GM10248 (cell line): ENCODE measurements at regions of chr19 and their contacts with region 1.

Region 1: GRCh38 chr19:28878862-28879566 is 333.9 kb downstream of the UQCRFS1 start:
- DNase-seq: peak; percentile 57
- CTCF ChIP-seq: peak; percentile 40

Region 2: DNA sequence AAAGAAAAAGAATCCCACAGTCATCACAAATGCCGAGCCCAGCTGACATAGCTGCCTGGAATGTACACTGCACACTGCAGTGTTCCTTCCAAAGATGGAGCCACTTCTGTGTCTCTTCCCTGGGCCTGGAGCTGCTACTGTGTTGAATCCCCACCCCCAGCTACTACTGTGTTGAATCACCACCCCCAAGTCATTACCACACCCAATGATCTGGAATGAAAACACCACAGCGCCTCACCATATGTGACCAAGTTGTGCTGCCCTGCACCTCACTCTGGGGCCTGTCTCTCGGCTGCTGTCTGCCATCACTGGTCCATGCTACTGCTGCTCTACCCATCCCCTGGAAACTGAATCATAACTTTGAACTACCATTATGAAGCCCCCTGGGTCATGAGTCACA is 527.3 kb before region 1 on chr19:
- CTCF ChIA-PET with region 1: no interaction called
- POLR2A ChIA-PET with region 1: no interaction called
- DNase-seq: no peak
- CTCF ChIP-seq: no peak

Region 3: DNA sequence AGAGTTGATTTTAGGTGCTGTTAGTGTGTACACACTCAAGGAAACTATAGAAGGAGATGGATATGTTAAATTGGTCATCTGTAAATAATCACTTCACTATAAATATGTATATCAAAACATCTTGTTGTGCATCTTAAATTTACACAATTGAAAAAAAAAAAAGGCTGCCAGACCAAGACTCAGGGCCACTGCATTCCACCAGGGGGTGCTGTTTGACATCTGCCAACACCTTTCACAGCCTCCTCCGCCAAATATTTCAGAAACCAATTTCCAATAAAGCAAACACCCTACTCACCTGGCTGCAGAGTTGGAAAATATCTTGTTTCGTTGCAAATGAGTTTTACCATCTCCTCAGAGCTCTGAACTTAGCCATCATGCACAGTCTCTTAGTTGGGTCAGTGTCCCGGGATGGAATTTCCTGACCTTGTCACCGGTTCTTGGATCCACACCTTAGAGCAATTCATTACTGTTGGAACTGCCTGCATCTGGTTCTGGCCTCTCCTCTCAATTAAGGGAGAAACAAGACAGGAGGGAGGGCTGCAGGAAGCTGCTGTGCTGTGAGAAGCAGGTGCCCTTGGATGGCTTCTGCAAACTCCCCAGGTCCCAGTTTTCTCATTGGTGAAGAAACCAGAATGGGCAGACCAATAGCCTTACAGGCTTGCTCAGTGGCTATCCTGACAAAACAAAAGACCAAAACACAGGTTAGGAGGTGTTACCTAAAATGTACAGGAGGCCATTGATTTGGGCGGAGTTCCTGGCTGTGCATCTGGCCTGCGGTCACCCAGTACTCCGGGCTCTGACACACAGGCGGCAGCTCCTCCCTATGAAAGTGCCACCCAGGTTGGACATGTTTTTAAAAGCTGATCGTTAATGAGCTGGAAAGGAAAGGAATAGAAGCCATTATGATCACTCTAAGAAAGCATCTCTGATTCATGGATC is 412.6 kb before region 1 on chr19:
- CTCF ChIA-PET with region 1: interaction called, 13 read pairs
- POLR2A ChIA-PET with region 1: no interaction called
- DNase-seq: peak; percentile 58
- CTCF ChIP-seq: peak; percentile 69

Region 4: GRCh38 chr19:28472843-28473242 is 406.2 kb before region 1 on chr19:
- CTCF ChIA-PET with region 1: interaction called, 11 read pairs
- POLR2A ChIA-PET with region 1: no interaction called
- DNase-seq: no peak
- CTCF ChIP-seq: no peak

Region 5: DNA sequence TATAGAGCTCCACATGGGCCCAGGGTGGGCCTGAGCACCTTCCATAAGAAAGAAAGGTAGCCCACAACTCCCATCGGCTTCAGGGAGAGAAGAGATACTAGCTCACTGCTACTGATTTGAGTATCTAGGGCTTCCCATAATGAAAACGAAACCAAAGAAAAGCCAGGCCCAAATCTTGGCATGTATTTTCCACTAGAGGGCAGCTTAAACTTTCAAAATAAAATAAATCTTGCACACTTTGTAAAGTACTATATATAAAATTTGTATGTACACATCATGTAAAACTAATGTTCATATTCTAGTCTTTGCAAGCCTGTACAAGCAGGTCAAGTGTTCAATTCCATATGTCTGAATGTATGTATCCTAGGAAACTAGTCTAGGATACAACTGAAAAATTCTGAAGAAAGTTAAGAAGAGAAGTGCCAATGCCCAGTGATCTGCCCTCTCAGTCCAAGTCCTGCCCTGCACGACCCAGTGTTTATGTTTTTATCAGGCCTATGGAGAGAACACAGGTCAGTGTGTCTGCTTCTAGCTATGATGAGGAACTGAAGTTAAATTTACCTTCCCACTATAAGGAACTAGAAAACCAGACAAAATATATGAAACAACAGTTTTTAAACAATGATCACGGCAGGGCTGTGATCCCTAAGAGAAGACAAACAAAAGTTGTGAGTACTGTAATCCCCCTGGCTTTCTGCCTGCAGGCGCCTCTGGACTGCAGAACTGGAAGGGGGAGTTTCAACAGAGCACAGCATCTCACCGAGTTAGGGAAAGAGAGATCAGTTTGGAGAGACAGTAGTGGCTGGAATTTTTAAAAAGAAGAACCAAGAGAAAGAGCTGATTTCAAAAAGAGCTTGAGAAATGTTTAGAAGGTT is 141.8 kb before region 1 on chr19:
- CTCF ChIA-PET with region 1: interaction called, 15 read pairs
- POLR2A ChIA-PET with region 1: no interaction called
- DNase-seq: peak; percentile 41
- CTCF ChIP-seq: peak; percentile 40

Region 6: GRCh38 chr19:28843737-28844492 is 35.1 kb before region 1 on chr19:
- CTCF ChIA-PET with region 1: no interaction called
- POLR2A ChIA-PET with region 1: no interaction called
- DNase-seq: no peak
- CTCF ChIP-seq: no peak

Region 7: GRCh38 chr19:28907534-28907933 is 28.5 kb after region 1 on chr19:
- CTCF ChIA-PET with region 1: no interaction called
- POLR2A ChIA-PET with region 1: no interaction called
- DNase-seq: no peak
- CTCF ChIP-seq: no peak

Region 8: DNA sequence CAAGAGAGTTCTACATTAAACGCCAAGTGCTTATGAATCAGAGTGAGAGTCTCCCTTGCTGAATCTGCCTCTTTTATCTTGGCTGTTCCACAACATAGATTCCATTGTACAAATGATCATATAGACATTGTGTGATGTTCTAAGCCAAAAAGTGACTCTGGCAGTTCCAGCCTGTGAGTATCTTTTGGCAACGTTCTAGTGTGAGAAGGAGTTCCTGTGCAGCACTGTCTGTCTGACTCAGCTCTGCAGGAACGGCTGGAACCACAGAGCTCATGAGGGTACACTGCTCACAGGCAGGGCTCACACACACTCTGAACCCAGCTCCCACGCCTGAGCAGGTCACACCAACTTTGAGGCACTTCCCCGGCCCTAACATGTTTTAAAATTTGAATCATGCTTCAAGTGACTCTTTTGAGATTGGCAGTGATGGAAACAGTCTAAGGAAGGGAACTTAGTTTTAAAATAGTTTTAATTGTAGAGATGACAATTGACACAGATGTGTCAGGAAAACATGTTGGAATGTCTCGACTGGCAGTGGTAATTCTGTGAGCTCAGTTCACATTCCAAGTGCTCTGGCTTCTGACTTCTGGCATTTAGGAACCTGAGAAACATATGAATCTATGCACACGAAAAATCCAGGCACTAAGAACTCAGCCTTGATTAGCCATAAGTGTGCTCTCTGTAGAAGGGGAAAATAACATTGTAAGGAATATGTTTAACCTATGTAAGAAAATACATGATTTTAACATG is 61.9 kb after region 1 on chr19:
- CTCF ChIA-PET with region 1: no interaction called
- POLR2A ChIA-PET with region 1: no interaction called
- DNase-seq: no peak
- CTCF ChIP-seq: no peak